Psoas muscle (tissue), 8 donors: ENCODE measurements at regions of chr12 and their contacts with region 1.

Region 1: DNA sequence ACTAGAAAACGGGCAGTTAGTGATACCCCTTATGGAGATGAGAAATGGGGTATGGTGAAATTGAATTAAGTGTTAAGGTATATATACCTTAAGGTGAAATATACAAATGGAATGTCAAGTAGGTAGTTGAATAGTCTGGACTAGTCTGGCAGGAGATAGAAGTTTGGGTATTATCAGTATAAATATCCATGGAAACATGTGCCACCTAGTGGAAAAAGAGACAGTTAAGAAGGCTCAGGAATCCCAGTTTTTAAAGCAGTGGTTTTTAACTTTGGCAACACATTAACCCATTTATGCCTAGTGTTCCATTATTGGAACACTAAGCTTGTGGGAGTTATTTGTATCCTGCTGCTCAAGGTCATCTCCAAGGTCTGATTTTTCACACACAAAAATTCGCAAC is 38.6 kb upstream of the TPH2 start:
- DNase-seq: no peak
- ATAC-seq: no peak
- H3K4me3 ChIP-seq: no peak overlapping the region
- H3K27ac ChIP-seq: no peak overlapping the region
- H3K4me1 ChIP-seq: no peaks in the 10 kb centered on the region
- H3K27me3 ChIP-seq: no peaks in the 10 kb centered on the region
- CTCF ChIP-seq: no peak

Region 2: DNA sequence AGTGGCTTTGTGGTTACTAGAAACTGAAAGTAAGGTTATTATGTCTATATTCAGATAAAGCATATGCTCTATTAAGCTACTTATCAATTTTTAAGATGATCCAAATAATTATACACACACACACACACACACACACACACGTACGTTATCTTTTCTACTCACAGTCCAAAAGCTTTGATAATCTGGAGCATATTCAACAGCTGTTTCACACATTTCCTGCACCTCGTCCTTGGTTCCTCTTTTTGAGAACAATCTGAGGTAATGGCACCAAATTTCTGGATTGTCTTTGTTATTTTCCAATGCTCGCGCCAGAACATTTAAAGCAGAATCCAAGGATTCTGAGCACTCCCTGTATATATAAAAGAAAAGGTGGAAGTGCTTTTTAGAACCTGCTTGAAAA is 274.0 kb before region 1 on chr12:
- intact Hi-C with region 1: loop called (anchors 10 kb)
- DNase-seq: no peak
- ATAC-seq: no peak
- H3K4me3 ChIP-seq: no peak overlapping the region
- H3K27ac ChIP-seq: no peak overlapping the region
- H3K4me1 ChIP-seq: peaks cover 3% of the 10 kb centered on the region
- H3K27me3 ChIP-seq: no peaks in the 10 kb centered on the region
- CTCF ChIP-seq: no peak

Region 3: GRCh38 chr12:71636704-71637115 is 263.4 kb before region 1 on chr12:
- intact Hi-C with region 1: loop called in 1 of 2 experiments (anchors 10 kb)
- DNase-seq: no peak
- ATAC-seq: peak in 1 of 4 donors; percentile 68
- H3K4me3 ChIP-seq: no peak overlapping the region
- H3K27ac ChIP-seq: no peak overlapping the region
- H3K4me1 ChIP-seq: no peaks in the 10 kb centered on the region
- H3K27me3 ChIP-seq: no peaks in the 10 kb centered on the region
- CTCF ChIP-seq: peak; percentile 72

Region 4: GRCh38 chr12:71772735-71773134 is 127.4 kb before region 1 on chr12:
- intact Hi-C with region 1: loop called (anchors 5 to 10 kb)
- DNase-seq: no peak
- ATAC-seq: no peak
- H3K4me3 ChIP-seq: no peak overlapping the region
- H3K27ac ChIP-seq: no peak overlapping the region
- H3K4me1 ChIP-seq: peaks cover 24% of the 10 kb centered on the region
- H3K27me3 ChIP-seq: no peaks in the 10 kb centered on the region
- CTCF ChIP-seq: no peak

Region 5: DNA sequence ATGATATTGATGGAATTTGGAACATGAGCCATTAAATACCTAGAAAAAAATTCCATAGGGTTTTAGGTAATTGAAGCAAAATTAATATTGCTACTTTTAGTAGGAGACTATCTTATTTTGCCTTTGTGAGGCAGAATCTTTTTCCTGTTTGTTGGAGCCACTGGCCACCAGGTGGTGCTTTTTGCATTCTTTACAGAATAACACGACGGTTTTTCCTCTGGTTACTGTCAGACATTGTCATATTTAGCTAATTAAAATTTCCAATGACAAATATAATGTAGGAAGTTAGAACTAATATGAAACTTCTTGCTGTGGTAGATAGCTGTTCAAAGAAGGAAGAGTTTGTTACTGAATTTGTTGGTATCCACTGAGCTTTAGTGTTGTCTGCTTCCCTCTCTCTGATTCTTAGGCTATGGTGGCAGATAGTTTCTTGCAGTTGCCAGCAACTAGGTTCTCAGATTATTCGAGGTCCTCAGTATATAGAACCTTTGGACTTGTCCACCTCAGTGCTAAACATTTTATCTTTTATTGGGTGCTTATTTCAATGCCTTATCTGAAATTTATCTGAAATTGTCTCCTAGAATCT is 119.8 kb before region 1 on chr12:
- intact Hi-C with region 1: loop called (anchors 5 to 10 kb)
- DNase-seq: no peak
- ATAC-seq: peak in 2 of 4 donors; percentile 43 to 67
- H3K4me3 ChIP-seq: no peak overlapping the region
- H3K27ac ChIP-seq: no peak overlapping the region
- H3K4me1 ChIP-seq: no peaks in the 10 kb centered on the region
- H3K27me3 ChIP-seq: no peaks in the 10 kb centered on the region
- CTCF ChIP-seq: peak; percentile 71

Region 6: GRCh38 chr12:71888521-71888920 is 11.6 kb before region 1 on chr12:
- intact Hi-C with region 1: loop called in 1 of 2 experiments (anchors 1 kb)
- DNase-seq: no peak
- ATAC-seq: peak in 2 of 4 donors; percentile 33 to 40
- H3K4me3 ChIP-seq: no peak overlapping the region
- H3K27ac ChIP-seq: no peak overlapping the region
- H3K4me1 ChIP-seq: peaks cover 4% of the 10 kb centered on the region
- H3K27me3 ChIP-seq: no peaks in the 10 kb centered on the region
- CTCF ChIP-seq: no peak